ENCODE measurements at regions of chrX and their contacts with region 1.

Region 1: GRCh38 chrX:13005661-13006473 is 31.0 kb downstream of the TMSB4X start:
- DNase-seq: no peak
- H3K4me3 Mint-ChIP-seq: no peak overlapping the region
- H3K27ac Mint-ChIP-seq: no peak overlapping the region
- H3K4me1 Mint-ChIP-seq: peaks cover 12% of the 10 kb centered on the region
- H3K27me3 Mint-ChIP-seq: peaks cover 33% of the 10 kb centered on the region
- CTCF ChIP-seq: no peak

Region 2: DNA sequence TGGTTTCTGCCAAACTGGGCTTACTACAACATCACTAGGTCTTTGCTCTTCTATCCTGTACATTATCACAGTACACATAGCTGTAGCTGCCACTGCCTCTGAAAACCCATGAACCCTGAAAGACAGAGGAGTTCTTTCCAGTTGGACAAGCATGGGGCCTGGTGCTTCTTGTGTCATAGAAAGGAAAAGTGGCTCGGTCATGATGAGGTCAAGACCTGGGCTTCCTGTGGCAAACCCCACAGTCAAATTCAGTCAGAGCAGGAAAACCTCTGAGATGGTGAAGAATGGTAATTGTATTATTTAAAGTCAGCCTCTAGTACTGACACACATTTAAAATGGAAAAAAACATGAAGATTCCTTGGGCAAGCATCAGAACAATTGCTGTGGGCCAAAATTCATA is 348.0 kb before region 1 on chrX:
- CTCF ChIA-PET with region 1: no interaction called
- POLR2A ChIA-PET with region 1: no interaction called
- intact Hi-C with region 1: no loop called
- DNase-seq: no peak
- H3K4me3 Mint-ChIP-seq: no peak overlapping the region
- H3K27ac Mint-ChIP-seq: no peak overlapping the region
- H3K4me1 Mint-ChIP-seq: no peaks in the 10 kb centered on the region
- H3K27me3 Mint-ChIP-seq: no peaks in the 10 kb centered on the region
- CTCF ChIP-seq: no peak

Region 3: GRCh38 chrX:12789976-12790375 is 215.9 kb before region 1 on chrX:
- CTCF ChIA-PET with region 1: no interaction called
- POLR2A ChIA-PET with region 1: no interaction called
- intact Hi-C with region 1: no loop called
- DNase-seq: no peak
- H3K4me3 Mint-ChIP-seq: peak overlapping the region; percentile 75
- H3K27ac Mint-ChIP-seq: no peak overlapping the region
- H3K4me1 Mint-ChIP-seq: peaks cover 4% of the 10 kb centered on the region
- H3K27me3 Mint-ChIP-seq: peaks cover 19% of the 10 kb centered on the region
- CTCF ChIP-seq: no peak

Region 4: GRCh38 chrX:12988797-12989196 is 17.1 kb before region 1 on chrX:
- CTCF ChIA-PET with region 1: interaction called, 5 read pairs
- POLR2A ChIA-PET with region 1: interaction called, 7 read pairs
- intact Hi-C with region 1: loop called (anchors 2 kb)
- DNase-seq: peak; percentile 88
- H3K4me3 Mint-ChIP-seq: peak overlapping the region; percentile 59
- H3K27ac Mint-ChIP-seq: peak overlapping the region; percentile 42
- H3K4me1 Mint-ChIP-seq: peaks cover 26% of the 10 kb centered on the region
- H3K27me3 Mint-ChIP-seq: peaks cover 13% of the 10 kb centered on the region
- CTCF ChIP-seq: no peak

Measured in MCF 10A (cell line).